ENCODE measurements at regions of chr11 and their contacts with region 1.

Region 1: GRCh38 chr11:128695539-128696221 is 1.8 kb downstream of the FLI1 start:
- DNase-seq: no peak
- H3K4me3 Mint-ChIP-seq: peak overlapping the region; percentile 80
- H3K27ac Mint-ChIP-seq: peak overlapping the region; percentile 87
- H3K4me1 Mint-ChIP-seq: peaks cover 63% of the 10 kb centered on the region
- H3K27me3 Mint-ChIP-seq: peaks cover 15% of the 10 kb centered on the region

Region 2: DNA sequence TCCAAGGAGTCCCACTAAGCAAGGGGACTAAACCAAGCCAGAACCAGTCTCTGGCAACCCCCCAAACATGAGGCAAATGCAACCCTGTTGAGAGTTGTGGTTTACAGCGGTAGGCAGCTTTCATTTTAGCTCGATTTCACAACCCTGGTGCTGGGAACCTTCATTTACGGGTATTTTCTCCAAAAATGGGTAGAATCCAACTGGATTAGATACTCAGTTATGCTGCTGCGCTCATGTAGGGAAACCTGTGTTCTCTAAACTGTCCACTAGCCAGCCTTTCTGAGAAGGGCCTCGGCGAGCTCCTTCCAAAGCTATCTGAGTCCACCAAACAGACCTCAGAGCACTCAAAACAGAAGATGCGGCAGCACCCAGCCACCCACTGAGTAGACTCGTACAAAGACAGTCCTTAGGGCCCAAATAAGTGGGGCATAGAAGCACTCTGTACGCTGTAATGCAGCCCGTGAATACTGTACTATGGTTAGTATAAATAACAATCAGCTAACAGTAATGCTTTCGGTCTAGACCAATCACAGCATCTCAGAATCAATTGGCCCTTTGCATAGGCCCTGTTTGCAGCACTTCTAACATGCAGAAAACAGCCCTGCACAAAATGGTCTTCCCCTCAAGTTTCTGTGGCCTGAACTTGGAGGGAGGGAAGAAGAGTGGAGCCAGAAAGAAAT is 213.0 kb before region 1 on chr11:
- intact Hi-C with region 1: loop called (anchors 5 kb)
- DNase-seq: no peak
- H3K4me3 Mint-ChIP-seq: peak overlapping the region; percentile 75
- H3K27ac Mint-ChIP-seq: peak overlapping the region; percentile 95
- H3K4me1 Mint-ChIP-seq: peaks cover 91% of the 10 kb centered on the region
- H3K27me3 Mint-ChIP-seq: no peaks in the 10 kb centered on the region

Region 3: GRCh38 chr11:128643661-128644317 is 51.9 kb before region 1 on chr11:
- intact Hi-C with region 1: loop called (anchors 5 kb)
- DNase-seq: no peak
- H3K4me3 Mint-ChIP-seq: no peak overlapping the region
- H3K27ac Mint-ChIP-seq: no peak overlapping the region
- H3K4me1 Mint-ChIP-seq: peaks cover 18% of the 10 kb centered on the region
- H3K27me3 Mint-ChIP-seq: peaks cover 24% of the 10 kb centered on the region

Region 4: DNA sequence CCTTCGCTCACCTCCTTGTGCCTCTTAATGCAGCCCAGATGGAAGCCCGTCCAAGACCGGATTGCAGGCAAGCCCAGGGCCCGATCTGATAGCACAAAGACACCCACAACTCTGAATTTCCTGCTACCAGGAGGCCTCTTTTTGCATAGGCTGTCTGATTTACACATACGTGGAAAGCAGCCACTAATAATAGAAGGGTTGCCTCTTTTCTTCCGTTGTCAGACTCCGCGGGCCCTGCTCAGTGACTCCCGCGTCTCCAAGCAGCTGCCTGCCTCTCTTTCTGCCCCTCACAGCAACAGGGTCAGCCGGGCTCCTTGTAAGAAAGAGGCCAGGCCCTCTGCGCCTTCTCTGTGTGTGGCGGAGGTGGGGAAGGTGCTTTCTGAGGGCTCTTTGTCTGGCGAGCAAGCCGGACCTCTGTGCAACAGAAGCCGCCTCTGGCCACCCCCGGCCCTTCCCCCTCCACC is 24.9 kb after region 1 on chr11:
- intact Hi-C with region 1: loop called (anchors 1 kb)
- DNase-seq: no peak
- H3K4me3 Mint-ChIP-seq: peak overlapping the region; percentile 74
- H3K27ac Mint-ChIP-seq: peak overlapping the region; percentile 81
- H3K4me1 Mint-ChIP-seq: peaks cover 92% of the 10 kb centered on the region
- H3K27me3 Mint-ChIP-seq: no peaks in the 10 kb centered on the region

Region 5: GRCh38 chr11:128733440-128734102 is 37.9 kb after region 1 on chr11:
- intact Hi-C with region 1: loop called (anchors 1 kb)
- DNase-seq: no peak
- H3K4me3 Mint-ChIP-seq: peak overlapping the region; percentile 72
- H3K27ac Mint-ChIP-seq: peak overlapping the region; percentile 90
- H3K4me1 Mint-ChIP-seq: peaks cover 87% of the 10 kb centered on the region
- H3K27me3 Mint-ChIP-seq: no peaks in the 10 kb centered on the region

Region 6: GRCh38 chr11:128831174-128832120 is 135.8 kb after region 1 on chr11:
- intact Hi-C with region 1: no loop called
- DNase-seq: peak; percentile 75
- H3K4me3 Mint-ChIP-seq: peak overlapping the region; percentile 6
- H3K27ac Mint-ChIP-seq: peak overlapping the region; percentile 86
- H3K4me1 Mint-ChIP-seq: peaks cover 18% of the 10 kb centered on the region
- H3K27me3 Mint-ChIP-seq: peaks cover 5% of the 10 kb centered on the region

Measured in activated T-helper 2 cell treated with anti-CD3 and anti-CD28 coated beads, Interferon-gamma antibody, Interleukin-2, Interleukin-4, amounts not matched to agents 10 μg/mL and 5 μg/mL and 100 μg/mL, durations not matched to agents 14 hours and 24 hours and 36 hours (primary cell).